ENCODE measurements at regions of chr6 and their contacts with region 1.

Region 1: GRCh38 chr6:126033696-126034095 is 47.4 kb downstream of the TRMT11 start:
- DNase-seq: peak in 1 of 2 experiments; percentile 59
- H3K4me3 ChIP-seq: no peak overlapping the region
- H3K27ac ChIP-seq: no peak overlapping the region
- H3K4me1 ChIP-seq: peaks cover 7% of the 10 kb centered on the region; the same call in 1 of the 2 replicates
- H3K27me3 ChIP-seq: no peaks in the 10 kb centered on the region
- CTCF ChIP-seq: peak; percentile 73

Region 2: GRCh38 chr6:126170978-126171382 is 137.3 kb after region 1 on chr6:
- CTCF ChIA-PET with region 1: no interaction called
- POLR2A ChIA-PET with region 1: no interaction called
- intact Hi-C with region 1: loop called (anchors 10 kb)
- DNase-seq: no peak
- H3K4me3 ChIP-seq: no peak overlapping the region
- H3K27ac ChIP-seq: no peak overlapping the region
- H3K4me1 ChIP-seq: peaks cover 9% of the 10 kb centered on the region
- H3K27me3 ChIP-seq: no peaks in the 10 kb centered on the region
- CTCF ChIP-seq: peak; percentile 71

Region 3: GRCh38 chr6:126339796-126340609 is 306.3 kb after region 1 on chr6 and contains the start of gene CENPW:
- CTCF ChIA-PET with region 1: no interaction called
- POLR2A ChIA-PET with region 1: no interaction called
- intact Hi-C with region 1: loop called (anchors 10 kb)
- DNase-seq: peak; percentile 85 to 90
- H3K4me3 ChIP-seq: peak within 1 kb of the TSS; percentile 84
- H3K27ac ChIP-seq: peak within 1 kb of the TSS; percentile 39
- H3K4me1 ChIP-seq: peaks cover 30% of the 10 kb centered on the region
- H3K27me3 ChIP-seq: no peaks in the 10 kb centered on the region
- CTCF ChIP-seq: no peak
- total RNA-seq, gene CENPW: 54.5 and 85.1 TPM in 2 replicates